Activated CD4-positive, alpha-beta memory T cell treated with anti-CD3 and anti-CD28 coated beads for 36 hours (primary cell): ENCODE measurements at regions of chr17 and their contacts with region 1.

Region 1: GRCh38 chr17:30093463-30094147 is 23.0 kb upstream of the NSRP1 start:
- DNase-seq: peak; percentile 46
- H3K4me3 Mint-ChIP-seq: no peak overlapping the region
- H3K27ac Mint-ChIP-seq: no peak overlapping the region
- H3K4me1 Mint-ChIP-seq: peaks cover 4% of the 10 kb centered on the region
- H3K27me3 Mint-ChIP-seq: peaks cover 13% of the 10 kb centered on the region

Region 2: GRCh38 chr17:30021708-30022317 is 71.8 kb before region 1 on chr17:
- CTCF ChIA-PET with region 1: interaction called, 18 read pairs
- POLR2A ChIA-PET with region 1: no interaction called
- intact Hi-C with region 1: loop called (anchors 1 kb)
- DNase-seq: peak; percentile 23
- H3K4me3 Mint-ChIP-seq: no peak overlapping the region
- H3K27ac Mint-ChIP-seq: no peak overlapping the region
- H3K4me1 Mint-ChIP-seq: no peaks in the 10 kb centered on the region
- H3K27me3 Mint-ChIP-seq: no peaks in the 10 kb centered on the region

Region 3: DNA sequence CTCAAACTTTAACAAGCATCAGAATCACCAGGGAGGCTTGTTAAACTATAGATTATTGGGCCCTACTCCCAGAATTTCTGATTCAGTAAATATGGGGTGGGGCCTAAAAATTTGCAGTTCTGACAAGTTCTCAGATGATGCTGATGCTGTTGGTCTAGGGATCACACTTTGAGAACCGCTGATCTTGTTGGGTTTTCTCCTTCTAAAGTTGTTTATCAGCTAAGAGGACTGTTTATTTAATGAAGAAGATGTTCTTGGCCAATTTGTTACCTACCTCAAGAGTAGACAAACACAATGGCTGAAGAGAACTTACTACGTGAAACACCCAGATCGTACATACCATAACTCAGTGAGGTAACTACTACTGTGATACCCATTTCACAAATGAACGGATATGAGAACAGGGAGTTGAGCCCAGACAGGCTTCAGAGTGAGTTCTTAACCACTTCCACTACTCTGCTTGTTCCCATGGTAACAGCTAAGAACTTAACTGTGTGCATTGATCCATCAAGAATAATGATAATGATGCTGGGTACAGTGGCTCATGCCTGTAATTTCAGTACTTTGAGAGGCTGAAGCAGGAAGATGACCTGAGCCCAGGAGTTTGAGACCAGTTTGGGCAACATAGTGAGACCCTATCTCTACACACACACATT is 62.3 kb before region 1 on chr17:
- CTCF ChIA-PET with region 1: interaction called, 27 read pairs
- POLR2A ChIA-PET with region 1: no interaction called
- intact Hi-C with region 1: loop called (anchors 1 kb)
- DNase-seq: no peak
- H3K4me3 Mint-ChIP-seq: no peak overlapping the region
- H3K27ac Mint-ChIP-seq: no peak overlapping the region
- H3K4me1 Mint-ChIP-seq: no peaks in the 10 kb centered on the region
- H3K27me3 Mint-ChIP-seq: no peaks in the 10 kb centered on the region

Region 4: DNA sequence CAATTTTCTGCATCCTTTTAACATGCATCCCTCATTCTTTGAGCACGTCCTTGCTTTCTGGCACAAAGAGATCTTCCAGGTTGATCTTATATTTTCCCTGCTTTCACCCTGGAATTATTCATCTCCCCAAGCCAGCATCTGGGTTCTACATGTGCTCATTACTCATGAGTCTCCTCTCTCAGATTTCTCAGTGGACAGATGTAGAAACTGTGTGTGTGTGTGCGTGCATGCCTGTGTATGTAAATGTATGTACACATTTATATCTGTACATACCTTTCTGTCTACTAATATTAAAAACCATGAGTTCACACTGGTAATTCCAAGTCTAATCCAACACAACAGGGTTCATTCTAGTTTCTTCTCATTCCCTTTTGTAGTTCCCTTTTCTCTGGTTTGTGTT is 18.9 kb before region 1 on chr17:
- CTCF ChIA-PET with region 1: interaction called, 11 read pairs
- POLR2A ChIA-PET with region 1: no interaction called
- intact Hi-C with region 1: no loop called
- DNase-seq: no peak
- H3K4me3 Mint-ChIP-seq: no peak overlapping the region
- H3K27ac Mint-ChIP-seq: no peak overlapping the region
- H3K4me1 Mint-ChIP-seq: no peaks in the 10 kb centered on the region
- H3K27me3 Mint-ChIP-seq: peaks cover 8% of the 10 kb centered on the region